Transverse colon (tissue), 4 donors: ENCODE measurements at regions of chr1 and their contacts with region 1.

Region 1: DNA sequence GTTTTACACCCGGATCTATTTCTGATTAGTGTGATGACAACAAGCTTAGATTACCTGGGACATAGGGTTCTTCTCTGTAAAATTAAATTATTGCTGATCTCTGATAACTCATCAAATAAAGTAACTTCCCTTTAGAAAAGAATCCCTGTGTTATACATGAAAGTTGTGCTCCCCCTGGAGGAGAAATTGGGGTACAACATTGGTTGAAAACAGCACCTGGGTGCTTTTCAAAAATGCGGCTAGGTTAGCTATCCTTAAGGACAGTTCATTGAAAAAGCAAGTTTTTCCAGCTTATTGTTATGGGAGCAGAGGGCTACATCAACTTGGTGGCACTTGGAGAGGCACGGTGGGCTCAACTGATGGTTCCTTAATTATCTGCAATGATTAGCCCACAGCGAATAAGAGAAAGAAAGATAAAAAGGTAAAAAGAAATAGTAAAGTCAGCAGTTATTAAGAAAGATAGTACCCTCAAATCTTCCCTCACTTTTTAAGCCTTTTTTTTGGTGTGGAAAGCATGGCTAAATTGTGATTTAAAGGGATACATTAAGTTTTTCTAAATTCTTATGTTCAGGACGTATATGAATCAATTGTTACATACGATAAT is 97.8 kb downstream of the FMN2 start:
- DNase-seq: peak; percentile 33
- H3K4me3 ChIP-seq: no peak overlapping the region
- H3K27ac ChIP-seq: no peak overlapping the region
- H3K4me1 ChIP-seq: peaks cover 0 to 12% (median 8%) of the 10 kb centered on the region in 4 donors
- H3K27me3 ChIP-seq: peaks cover 9% of the 10 kb centered on the region
- CTCF ChIP-seq: peak; percentile 60 to 73 (median 71)
- EP300 ChIP-seq: no peak
- POLR2A ChIP-seq: no peak

Region 2: DNA sequence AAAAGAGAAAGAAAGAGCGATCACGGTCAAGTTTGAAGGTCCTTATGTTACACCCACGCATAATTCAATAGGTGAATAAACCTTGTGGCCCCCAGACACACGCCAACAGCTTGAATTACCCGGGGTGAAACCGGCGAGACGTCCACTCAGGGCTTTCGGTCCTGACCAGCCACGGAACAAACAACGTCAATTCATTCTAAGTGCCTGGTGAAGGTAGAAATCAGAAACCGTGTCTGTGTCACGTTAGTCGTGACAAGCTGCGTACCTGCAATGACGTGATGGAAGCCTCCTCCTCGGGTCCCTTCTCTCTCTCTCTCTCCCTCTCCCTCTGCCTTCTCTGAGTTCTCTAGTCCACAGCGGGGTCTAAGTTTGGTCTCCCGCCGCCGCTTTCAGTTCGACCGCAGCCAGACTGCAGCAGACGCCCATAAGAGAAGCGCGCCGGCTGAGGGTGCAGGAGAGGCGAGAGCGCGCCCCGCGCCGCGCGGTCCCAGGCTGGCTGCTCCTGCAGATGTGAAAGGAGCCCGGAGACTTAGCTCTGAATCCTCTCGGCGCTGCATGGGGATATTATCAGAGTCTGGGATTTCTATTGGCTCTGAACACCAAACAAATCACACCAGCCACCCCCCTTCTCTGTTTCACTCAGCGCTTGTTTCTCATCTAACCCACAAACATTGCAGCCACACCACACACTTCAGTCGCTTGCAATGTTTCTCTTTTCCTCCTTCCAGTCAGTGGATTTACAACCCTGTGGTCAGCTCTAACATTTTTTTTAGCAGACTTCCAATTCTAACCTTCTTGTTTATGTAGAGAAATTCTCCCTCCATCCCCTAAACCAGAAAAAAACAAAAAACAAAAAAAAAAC is 422.4 kb after region 1 on chr1 and contains the start of gene GREM2:
- in situ Hi-C with region 1: loop called in 2 of 4 experiments (anchors 10 to 25 kb)
- intact Hi-C with region 1: loop called (anchors 10 kb)
- DNase-seq: peak; percentile 62
- H3K4me3 ChIP-seq: peak within 1 kb of the TSS; percentile 38 to 61 (median 54)
- H3K27ac ChIP-seq: peak within 1 kb of the TSS; percentile 59 to 76 (median 70)
- H3K4me1 ChIP-seq: peaks cover 0 to 44% (median 10%) of the 10 kb centered on the region in 4 donors
- H3K27me3 ChIP-seq: peaks cover 15% of the 10 kb centered on the region
- CTCF ChIP-seq: no peak
- EP300 ChIP-seq: no peak
- POLR2A ChIP-seq: peak; percentile 39
- total RNA-seq, gene GREM2: 2.8 to 13.1 (median 4.9) TPM

Region 3: DNA sequence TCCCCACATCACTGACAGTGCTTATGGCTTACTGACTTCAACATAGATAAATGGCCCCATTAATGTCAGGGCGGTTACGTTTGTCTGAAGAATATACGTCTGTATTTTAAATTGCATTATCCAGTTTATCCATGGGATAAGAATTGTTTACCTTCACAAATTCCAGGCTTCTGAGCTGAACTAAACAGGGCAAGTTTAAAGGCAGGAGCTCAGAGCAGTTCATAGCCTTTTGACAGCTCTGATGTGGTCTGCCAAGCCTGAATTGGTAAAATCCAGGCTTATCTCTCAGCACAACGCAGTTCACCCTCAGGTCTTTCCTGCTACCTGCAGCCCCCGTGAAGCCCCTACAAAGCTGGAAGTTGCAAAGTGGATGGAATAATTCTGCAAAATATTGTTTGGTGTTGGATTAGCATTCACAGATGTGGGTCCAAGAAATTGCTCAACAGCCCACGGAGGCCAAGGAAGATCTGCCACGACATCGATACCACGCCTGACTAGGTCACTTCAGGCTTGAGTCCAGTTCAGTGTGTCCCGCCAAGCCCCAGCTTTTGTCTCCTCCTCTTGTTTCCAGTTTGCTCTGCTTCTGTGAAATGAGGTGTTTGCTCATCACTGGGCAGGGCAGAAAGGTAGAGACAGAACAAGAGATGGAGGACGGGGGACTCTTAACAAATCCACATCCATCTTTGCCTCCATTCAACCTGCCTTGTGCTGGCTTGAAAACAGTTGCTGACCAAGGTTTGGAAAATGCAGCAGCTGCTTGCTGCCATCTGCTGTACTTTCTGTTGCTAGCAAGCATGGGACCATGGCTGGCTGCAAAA is 502.2 kb after region 1 on chr1:
- in situ Hi-C with region 1: loop called in 2 of 4 experiments (anchors 25 kb)
- intact Hi-C with region 1: no loop called
- DNase-seq: peak; percentile 19
- H3K4me3 ChIP-seq: no peak overlapping the region
- H3K27ac ChIP-seq: peak overlapping the region; percentile 6 to 63 (median 12)
- H3K4me1 ChIP-seq: peaks cover 0 to 4% (median 0%) of the 10 kb centered on the region in 4 donors
- H3K27me3 ChIP-seq: no peaks in the 10 kb centered on the region
- CTCF ChIP-seq: peak; percentile 52 to 66 (median 61)
- EP300 ChIP-seq: no peak
- POLR2A ChIP-seq: no peak